ENCODE measurements at regions of chr7 and their contacts with region 1.

Region 1: DNA sequence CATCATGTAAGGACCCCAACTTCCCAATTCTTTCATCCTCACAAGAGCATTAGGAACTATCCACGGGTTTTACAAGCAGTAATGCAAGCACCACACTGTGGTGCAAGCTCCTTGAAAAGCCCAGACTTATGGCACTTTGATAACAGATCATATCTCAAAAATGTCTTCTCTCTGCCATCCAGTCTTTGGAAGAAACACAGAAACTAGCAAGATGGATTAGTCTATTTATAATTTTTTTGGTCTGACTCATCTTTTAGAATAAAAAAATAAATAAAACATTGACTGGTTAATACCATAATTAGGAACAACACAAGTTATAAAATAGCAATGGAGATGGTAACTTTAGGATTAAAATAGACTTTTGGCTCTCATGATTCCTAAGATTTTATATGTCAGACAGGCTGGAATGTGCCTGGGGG is 49.0 kb upstream of the CALD1 start:
- DNase-seq: no peak
- ATAC-seq: peak; percentile 49
- H3K4me3 ChIP-seq: no peak overlapping the region
- H3K27ac ChIP-seq: peak overlapping the region; percentile 95 to 98
- H3K4me1 ChIP-seq: peaks cover 7 to 12% of the 10 kb centered on the region in 2 donors
- H3K27me3 ChIP-seq: no peaks in the 10 kb centered on the region

Region 2: DNA sequence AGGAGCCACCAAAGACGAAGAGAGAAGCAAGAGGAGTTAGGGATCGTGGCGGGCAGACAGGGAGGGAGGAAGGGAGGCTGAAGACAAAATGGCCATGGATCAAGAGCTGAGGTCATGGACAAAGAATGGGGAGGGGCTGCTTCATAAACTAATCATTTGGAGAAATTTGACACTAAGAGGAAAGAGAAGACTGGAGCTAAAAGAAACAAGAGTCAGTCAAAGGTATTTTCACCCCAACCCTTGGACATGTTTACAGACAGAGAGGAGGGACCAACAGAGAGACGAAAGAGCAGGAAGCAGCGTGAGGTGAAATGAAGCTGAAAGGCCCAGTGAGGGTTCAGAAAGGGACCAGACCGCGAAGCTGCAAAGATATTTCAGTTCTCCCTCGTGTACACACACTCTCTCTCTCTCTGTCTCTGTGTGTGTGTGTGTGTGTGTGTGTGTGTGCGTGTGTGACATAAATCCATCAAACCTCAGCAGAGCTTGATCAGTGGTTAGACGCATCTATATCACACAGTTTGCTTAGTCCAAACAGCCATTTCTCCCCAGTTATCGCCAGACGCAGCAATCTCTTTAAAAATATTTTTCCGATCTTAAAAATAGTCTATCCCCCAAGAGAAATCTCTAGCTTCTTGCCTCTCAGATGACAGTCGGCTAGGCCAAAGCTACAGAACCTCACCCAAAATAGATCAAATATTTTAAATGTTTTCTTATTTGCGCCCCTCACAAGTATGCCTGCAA is 36.5 kb after region 1 on chr7:
- intact Hi-C with region 1: loop called in 1 of 2 experiments (anchors 5 kb)
- DNase-seq: no peak
- ATAC-seq: peak; percentile 62
- H3K4me3 ChIP-seq: no peak overlapping the region
- H3K27ac ChIP-seq: peak overlapping the region; percentile 73 to 97
- H3K4me1 ChIP-seq: peaks cover 3 to 7% of the 10 kb centered on the region in 2 donors
- H3K27me3 ChIP-seq: no peaks in the 10 kb centered on the region